Heart right ventricle (tissue), 16 donors: ENCODE measurements at regions of chrX and their contacts with region 1.

Region 1: DNA sequence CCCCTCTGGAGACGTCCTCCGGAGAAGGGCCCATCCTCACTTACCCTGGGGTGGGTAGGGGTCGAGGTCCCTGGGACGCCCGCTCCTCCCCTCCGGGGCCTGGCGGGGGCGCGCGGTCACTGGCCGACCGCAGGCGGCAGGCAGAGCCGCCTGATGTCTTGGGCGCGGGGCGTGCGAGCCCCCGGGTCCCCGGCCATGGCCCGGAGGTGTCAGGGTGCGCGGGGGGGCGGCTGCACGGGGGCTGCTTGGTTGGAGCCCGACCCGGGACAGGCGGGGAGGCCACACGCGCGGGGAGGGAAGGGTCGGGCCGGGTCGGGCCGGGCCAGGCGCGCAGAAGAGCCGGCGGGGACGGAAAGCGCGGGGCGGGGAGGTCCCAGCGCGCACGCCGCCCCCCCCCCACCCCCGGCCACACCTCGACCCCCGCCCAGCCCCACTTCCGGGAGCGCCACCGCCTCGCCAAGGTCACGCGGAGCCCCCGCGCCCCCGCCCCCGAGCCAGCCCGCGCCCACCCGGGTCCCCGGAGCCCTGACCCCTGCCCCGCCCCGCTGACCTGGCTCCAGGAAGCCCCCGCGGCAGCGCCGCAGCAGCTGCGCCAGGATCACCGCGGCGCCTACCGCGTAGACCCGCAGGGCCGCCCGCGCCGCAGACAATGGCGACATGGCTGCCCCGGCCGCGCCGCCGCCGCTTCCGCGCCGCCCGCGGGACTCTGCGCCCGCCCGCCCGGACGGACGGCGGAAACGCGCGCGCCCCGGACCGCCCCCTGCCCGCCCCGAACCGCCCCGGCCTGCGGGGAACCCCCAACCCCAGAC is at the starts of genes DHRSX and ZBED1:
- DNase-seq: peak; percentile 43 to 67
- ATAC-seq: peak; percentile 44 to 83 (median 61)
- H3K4me3 ChIP-seq: peak within 1 kb of the TSS; percentile 68 to 96 (median 88)
- H3K27ac ChIP-seq: peak within 1 kb of the TSS; percentile 63 to 97 (median 94)
- H3K4me1 ChIP-seq: peaks cover 7 to 42% (median 33%) of the 10 kb centered on the region in 9 donors
- H3K27me3 ChIP-seq: no peaks in the 10 kb centered on the region
- CTCF ChIP-seq: peak in 4 of 9 donors; percentile 21 to 34 (median 30)
- total RNA-seq, gene DHRSX: 21.1 to 35.9 (median 28.5) TPM
- total RNA-seq, gene ZBED1: 41.5 to 60.8 (median 54.4) TPM

Region 2: GRCh38 chrX:2283111-2284067 is 217.1 kb before region 1 on chrX:
- intact Hi-C with region 1: loop called in 1 of 10 experiments (anchors 10 kb)
- DNase-seq: no peak
- ATAC-seq: no peak
- H3K4me3 ChIP-seq: no peak overlapping the region
- H3K27ac ChIP-seq: no peak overlapping the region
- H3K4me1 ChIP-seq: no peaks in the 10 kb centered on the region
- H3K27me3 ChIP-seq: no peaks in the 10 kb centered on the region
- CTCF ChIP-seq: no peak

Region 3: GRCh38 chrX:2608638-2609430 is 108.4 kb after region 1 on chrX:
- intact Hi-C with region 1: loop called in 1 of 10 experiments (anchors 10 kb)
- DNase-seq: peak; percentile 86 to 92
- ATAC-seq: peak; percentile 96 to 99 (median 98)
- H3K4me3 ChIP-seq: peak overlapping the region; percentile 62 to 94 (median 83)
- H3K27ac ChIP-seq: peak overlapping the region in 9 of 10 donors; percentile 54 to 93 (median 82)
- H3K4me1 ChIP-seq: peaks cover 0 to 26% (median 11%) of the 10 kb centered on the region in 9 donors
- H3K27me3 ChIP-seq: no peaks in the 10 kb centered on the region
- CTCF ChIP-seq: no peak

Region 4: GRCh38 chrX:2819345-2820135 is 319.1 kb after region 1 on chrX:
- intact Hi-C with region 1: no loop called
- DNase-seq: no peak
- ATAC-seq: no peak
- H3K4me3 ChIP-seq: no peak overlapping the region
- H3K27ac ChIP-seq: no peak overlapping the region
- H3K4me1 ChIP-seq: no peaks in the 10 kb centered on the region
- H3K27me3 ChIP-seq: peaks cover 0 to 27% (median 0%) of the 10 kb centered on the region in 7 donors
- CTCF ChIP-seq: peak in 8 of 9 donors; percentile 13 to 59 (median 48)

Region 5: DNA sequence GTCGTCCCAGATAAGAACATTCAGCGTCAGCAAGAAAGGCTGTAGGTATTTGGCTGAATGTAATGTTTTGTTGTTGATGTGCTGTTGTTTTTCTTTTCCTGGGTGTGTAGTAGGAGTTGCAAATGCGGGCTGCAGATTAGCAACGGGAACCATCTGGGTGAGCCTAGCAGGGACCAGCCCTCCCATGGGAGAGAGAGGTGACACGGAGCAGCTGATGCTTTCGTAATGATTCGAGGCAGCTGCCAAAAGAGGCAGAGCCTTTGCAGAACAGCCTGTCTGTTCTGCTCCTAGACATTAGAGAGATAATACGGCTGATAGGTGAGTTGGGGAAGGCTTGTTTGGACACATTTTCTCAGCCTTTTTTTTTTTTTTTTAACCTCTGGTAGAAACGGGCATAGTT is 566.1 kb after region 1 on chrX:
- intact Hi-C with region 1: no loop called
- DNase-seq: peak; percentile 11 to 20
- ATAC-seq: peak in 3 of 8 donors; percentile 34 to 74 (median 37)
- H3K4me3 ChIP-seq: no peak overlapping the region
- H3K27ac ChIP-seq: no peak overlapping the region
- H3K4me1 ChIP-seq: peaks cover 0 to 9% (median 0%) of the 10 kb centered on the region in 9 donors
- H3K27me3 ChIP-seq: no peaks in the 10 kb centered on the region
- CTCF ChIP-seq: no peak